K562 (cell line): ENCODE measurements at regions of chr17 and their contacts with region 1.

Region 1: GRCh38 chr17:7745748-7746470 is 28.4 kb downstream of the DNAH2 start:
- DNase-seq: peak in 2 of 4 experiments; percentile 11 to 33
- ATAC-seq: peak; percentile 72
- H3K4me3 ChIP-seq: no peak overlapping the region
- H3K27ac ChIP-seq: no peak overlapping the region
- H3K4me1 ChIP-seq: no peaks in the 10 kb centered on the region; a peak in 2 of 5 replicates
- H3K27me3 ChIP-seq: peaks cover under 1 to 13% of the 10 kb centered on the region in 2 experiments; a peak in 3 of 5 replicates
- CTCF ChIP-seq: peak in 1 of 3 experiments; percentile 16; a peak in 1 of 6 replicates
- EP300 ChIP-seq: no peak
- POLR2A ChIP-seq: no peak
- RAD21 ChIP-seq: no peak

Region 2: GRCh38 chr17:7572588-7573323 is 173.2 kb before region 1 on chr17:
- CTCF ChIA-PET with region 1: no interaction called
- POLR2A ChIA-PET with region 1: no interaction called
- in situ Hi-C with region 1: no loop called
- intact Hi-C with region 1: no loop called
- DNase-seq: peak; percentile 89 to 98 (median 93)
- ATAC-seq: peak; percentile 94
- H3K4me3 ChIP-seq: peak overlapping the region; percentile 99
- H3K27ac ChIP-seq: peak overlapping the region; percentile 98
- H3K4me1 ChIP-seq: peaks cover 8 to 23% of the 10 kb centered on the region in 2 experiments; a peak in 4 of 5 replicates
- H3K27me3 ChIP-seq: no peaks in the 10 kb centered on the region
- CTCF ChIP-seq: no peak
- EP300 ChIP-seq: no peak
- POLR2A ChIP-seq: peak; percentile 99
- RAD21 ChIP-seq: no peak

Region 3: DNA sequence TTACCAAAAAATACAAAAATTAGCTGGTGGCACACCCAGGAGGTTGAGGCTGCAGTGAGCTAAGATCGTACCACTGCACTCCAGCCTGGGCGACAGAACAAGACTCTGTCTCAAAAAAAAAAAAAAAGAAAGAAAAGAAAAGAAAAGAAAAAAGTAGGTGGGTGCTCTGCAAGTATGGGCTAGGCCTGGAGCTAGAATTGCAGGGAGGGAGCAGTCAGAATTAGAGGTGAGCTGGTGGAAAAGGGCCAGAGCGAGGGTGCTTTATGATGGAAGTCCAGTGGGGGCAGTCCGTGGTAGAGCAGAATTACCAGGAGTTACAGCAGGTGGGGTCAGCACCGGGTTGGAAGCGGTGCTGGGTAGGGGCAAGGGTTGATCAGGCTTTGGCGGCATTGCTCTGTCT is 31.1 kb after region 1 on chr17:
- CTCF ChIA-PET with region 1: no interaction called
- POLR2A ChIA-PET with region 1: interaction called, 3 read pairs
- in situ Hi-C with region 1: no loop called
- intact Hi-C with region 1: loop called (anchors 2 kb)
- DNase-seq: no peak
- ATAC-seq: no peak
- H3K4me3 ChIP-seq: no peak overlapping the region
- H3K27ac ChIP-seq: no peak overlapping the region
- H3K4me1 ChIP-seq: no peaks in the 10 kb centered on the region; a peak in 1 of 5 replicates
- H3K27me3 ChIP-seq: peaks cover 16 to 41% of the 10 kb centered on the region in 2 experiments; a peak in 4 of 5 replicates
- CTCF ChIP-seq: no peak
- EP300 ChIP-seq: no peak
- POLR2A ChIP-seq: no peak
- RAD21 ChIP-seq: no peak

Region 4: DNA sequence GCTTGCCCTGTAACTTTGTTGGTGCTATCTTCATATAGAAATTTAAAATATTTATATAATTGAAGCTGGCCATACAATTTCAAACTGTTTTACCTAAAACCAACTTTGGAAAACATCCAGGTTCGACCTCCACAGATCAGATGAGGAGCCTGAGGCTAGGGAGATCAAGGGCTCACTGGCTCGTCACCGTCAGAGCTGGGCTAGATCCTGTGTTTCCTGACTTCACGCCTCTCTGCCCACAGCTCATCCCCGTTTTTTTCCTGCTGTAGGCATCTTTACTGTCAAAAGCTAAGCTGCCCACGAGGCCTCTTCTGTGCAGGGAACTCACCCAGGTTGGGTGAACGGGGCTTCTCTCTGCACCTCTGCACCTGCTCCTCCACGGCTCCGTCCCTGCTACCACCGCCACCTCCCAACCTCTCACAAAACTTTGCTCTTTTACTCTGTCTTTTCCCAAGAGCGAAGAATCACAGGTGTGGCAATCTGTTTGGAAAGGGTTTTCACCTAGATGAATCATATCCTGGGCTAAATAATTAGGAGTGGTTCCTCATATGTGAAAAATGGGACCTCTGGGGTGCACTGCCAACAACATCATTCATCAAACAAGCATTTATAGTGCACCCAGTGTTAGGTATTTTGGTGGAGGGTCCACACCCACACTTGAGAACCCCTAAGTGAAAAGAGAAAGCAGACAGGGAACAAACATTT is 63.3 kb after region 1 on chr17:
- CTCF ChIA-PET with region 1: no interaction called
- POLR2A ChIA-PET with region 1: no interaction called
- in situ Hi-C with region 1: no loop called
- intact Hi-C with region 1: no loop called
- DNase-seq: no peak
- ATAC-seq: no peak
- H3K4me3 ChIP-seq: no peak overlapping the region
- H3K27ac ChIP-seq: no peak overlapping the region
- H3K4me1 ChIP-seq: no peaks in the 10 kb centered on the region; a peak in 1 of 5 replicates
- H3K27me3 ChIP-seq: peaks cover 5 to 32% of the 10 kb centered on the region in 2 experiments; a peak in 4 of 5 replicates
- CTCF ChIP-seq: no peak
- EP300 ChIP-seq: no peak
- POLR2A ChIP-seq: no peak
- RAD21 ChIP-seq: no peak

Region 5: DNA sequence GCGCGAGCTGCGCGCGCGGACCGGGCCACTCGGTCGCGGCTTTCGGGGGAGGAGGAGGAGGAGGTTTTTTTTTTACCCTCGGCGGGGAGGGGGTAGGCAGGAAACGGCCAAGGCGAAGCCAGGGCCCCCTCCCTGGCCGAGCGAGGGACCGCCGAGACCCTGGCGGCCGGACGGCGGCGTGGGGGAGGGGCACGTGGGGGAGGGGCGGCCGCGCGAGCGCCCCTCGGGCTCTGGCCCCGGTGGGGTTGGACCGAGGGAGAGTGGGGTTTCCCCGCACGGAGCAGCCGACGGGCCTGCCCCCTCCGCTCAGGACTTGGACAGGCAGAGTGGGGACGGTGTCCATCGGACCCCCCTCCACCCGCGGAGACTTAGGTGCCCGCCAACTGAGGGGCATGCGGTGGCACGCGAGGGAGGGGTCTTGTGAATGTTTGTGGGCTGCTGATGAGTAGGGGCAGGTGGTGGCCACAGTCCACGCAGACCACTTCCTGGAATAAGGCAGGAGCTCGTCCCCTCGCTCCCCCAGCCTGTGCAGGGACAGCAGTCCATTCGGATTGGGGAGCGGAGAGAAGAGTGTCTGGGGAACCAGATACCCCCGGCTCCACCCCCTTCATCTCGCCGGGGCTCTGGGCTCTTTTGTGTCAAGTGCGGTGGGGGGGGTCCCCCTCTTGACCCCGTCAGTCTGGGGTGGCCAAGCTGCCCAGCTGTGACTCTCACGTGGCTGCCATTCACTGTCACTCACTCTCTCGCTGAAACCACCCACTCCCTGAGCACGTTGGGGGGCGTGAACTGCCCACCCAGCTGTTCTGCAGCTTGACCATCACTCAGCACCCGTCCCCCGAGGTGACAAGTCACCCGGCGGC is 139.7 kb after region 1 on chr17:
- CTCF ChIA-PET with region 1: no interaction called
- POLR2A ChIA-PET with region 1: no interaction called
- in situ Hi-C with region 1: no loop called
- intact Hi-C with region 1: no loop called
- DNase-seq: peak; percentile 55 to 82 (median 70)
- ATAC-seq: peak; percentile 68
- H3K4me3 ChIP-seq: peak overlapping the region; percentile 66
- H3K27ac ChIP-seq: peak overlapping the region; percentile 97
- H3K4me1 ChIP-seq: peaks cover 38% of the 10 kb centered on the region in 2 experiments
- H3K27me3 ChIP-seq: no peaks in the 10 kb centered on the region
- CTCF ChIP-seq: no peak
- EP300 ChIP-seq: no peak; the same call in 1 of the 2 replicates
- POLR2A ChIP-seq: peak; percentile 74
- RAD21 ChIP-seq: no peak